Aorta (tissue), 5 donors: ENCODE measurements at regions of chr1 and their contacts with region 1.

Region 1: GRCh38 chr1:18926315-18927081 is 24.1 kb upstream of the ALDH4A1 start:
- DNase-seq: peak; percentile 90 to 92
- ATAC-seq: peak; percentile 67
- H3K4me3 ChIP-seq: no peak overlapping the region
- H3K27ac ChIP-seq: peak overlapping the region; percentile 78 to 92
- H3K4me1 ChIP-seq: no peaks in the 10 kb centered on the region
- H3K27me3 ChIP-seq: no peaks in the 10 kb centered on the region

Region 2: DNA sequence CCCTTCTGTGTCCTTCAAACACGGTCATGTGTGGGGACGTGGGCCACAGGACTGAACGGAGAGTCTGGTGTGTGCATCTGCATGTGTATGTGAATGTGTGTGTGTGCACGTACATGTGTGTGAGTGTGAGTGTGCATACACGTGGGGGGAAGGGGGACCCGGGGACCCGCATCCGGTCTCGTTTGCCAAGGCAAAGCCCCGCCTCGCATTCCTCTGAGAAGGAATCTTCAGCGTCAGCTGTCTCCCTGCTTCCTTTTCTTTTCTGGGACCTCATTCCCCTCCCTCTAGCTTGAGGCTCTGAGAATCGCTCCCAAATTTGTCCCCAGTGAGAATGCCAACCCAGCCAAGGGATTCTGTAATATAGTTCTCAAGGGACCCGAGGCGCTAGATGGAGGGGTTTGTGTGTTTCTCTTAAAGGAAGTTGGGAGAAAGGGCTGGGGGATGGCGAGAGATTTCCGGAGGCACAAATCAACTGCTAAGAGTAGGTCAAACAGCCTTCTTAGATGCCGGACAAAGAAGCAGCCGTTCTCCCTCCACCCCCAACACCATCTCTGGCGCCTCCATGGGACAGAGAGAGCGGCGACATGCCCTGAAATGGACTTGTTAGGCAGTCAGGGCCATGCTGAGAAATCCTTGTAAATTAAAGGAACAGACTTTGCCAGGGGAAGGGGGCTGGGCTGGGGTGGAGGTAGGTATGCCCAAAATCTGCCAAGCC is 23.3 kb after region 1 on chr1:
- intact Hi-C with region 1: loop called (anchors 1 to 2 kb)
- DNase-seq: peak in 1 of 2 donors; percentile 70
- ATAC-seq: peak; percentile 65
- H3K4me3 ChIP-seq: peak overlapping the region; percentile 3 to 8
- H3K27ac ChIP-seq: peak overlapping the region; percentile 67 to 97
- H3K4me1 ChIP-seq: peaks cover 0 to 4% of the 10 kb centered on the region in 2 donors
- H3K27me3 ChIP-seq: no peaks in the 10 kb centered on the region

Region 3: GRCh38 chr1:18978706-18979105 is 52.2 kb after region 1 on chr1:
- intact Hi-C with region 1: no loop called
- DNase-seq: no peak
- ATAC-seq: no peak
- H3K4me3 ChIP-seq: no peak overlapping the region
- H3K27ac ChIP-seq: no peak overlapping the region
- H3K4me1 ChIP-seq: no peaks in the 10 kb centered on the region
- H3K27me3 ChIP-seq: no peaks in the 10 kb centered on the region

Region 4: GRCh38 chr1:19010995-19011844 is 84.7 kb after region 1 on chr1:
- intact Hi-C with region 1: loop called in 1 of 2 experiments (anchors 2 kb)
- DNase-seq: peak; percentile 93
- ATAC-seq: peak; percentile 90
- H3K4me3 ChIP-seq: no peak overlapping the region
- H3K27ac ChIP-seq: peak overlapping the region; percentile 72 to 95
- H3K4me1 ChIP-seq: peaks cover 2 to 4% of the 10 kb centered on the region in 2 donors
- H3K27me3 ChIP-seq: no peaks in the 10 kb centered on the region